ENCODE measurements at regions of chr10 and their contacts with region 1.

Region 1: DNA sequence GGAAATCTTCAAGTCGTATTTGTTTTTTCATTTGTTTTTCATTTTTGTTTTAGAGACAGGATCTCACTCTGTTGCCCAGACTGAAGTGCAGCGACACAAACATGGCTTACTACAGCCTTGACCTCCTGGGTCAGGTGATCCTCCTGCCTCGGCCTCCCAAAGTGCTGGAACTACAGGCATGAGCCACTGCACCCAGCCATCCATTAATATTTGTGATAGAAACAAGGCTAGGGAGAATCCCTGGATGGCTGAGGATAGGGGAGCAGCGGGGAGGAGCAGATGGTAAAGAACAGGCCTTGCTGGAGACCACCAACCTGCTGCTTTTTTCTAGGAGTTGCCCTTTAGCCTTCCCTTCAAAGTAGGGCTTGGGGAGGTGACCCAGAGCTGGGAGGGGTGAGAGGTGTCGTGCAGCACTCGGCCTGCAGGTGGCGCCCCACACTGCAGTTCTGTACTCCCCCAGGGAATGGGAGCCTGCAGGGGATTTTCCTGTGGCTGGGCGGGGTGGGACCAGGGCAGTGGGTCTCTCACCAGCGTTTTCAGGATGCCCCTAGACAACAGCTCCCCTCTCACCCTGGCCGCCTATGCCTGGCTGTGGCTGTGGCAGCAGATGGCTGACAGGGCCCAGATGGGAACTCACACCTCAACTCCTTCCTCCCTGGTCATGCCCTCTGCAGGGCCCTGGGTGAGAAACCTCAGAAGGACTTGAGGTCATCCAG is 12.6 kb upstream of the CDH23 start:
- DNase-seq: peak; percentile 52 to 84 (median 67)
- ATAC-seq: peak; percentile 96
- H3K4me3 ChIP-seq: no peak overlapping the region
- H3K4me3 Mint-ChIP-seq: no peak overlapping the region
- H3K27ac ChIP-seq: no peak overlapping the region
- H3K27ac Mint-ChIP-seq: no peak overlapping the region
- H3K4me1 ChIP-seq: peaks cover 5% of the 10 kb centered on the region
- H3K4me1 Mint-ChIP-seq: no peaks in the 10 kb centered on the region
- H3K27me3 ChIP-seq: no peaks in the 10 kb centered on the region
- H3K27me3 Mint-ChIP-seq: no peaks in the 10 kb centered on the region
- CTCF ChIP-seq: peak; percentile 90

Region 2: DNA sequence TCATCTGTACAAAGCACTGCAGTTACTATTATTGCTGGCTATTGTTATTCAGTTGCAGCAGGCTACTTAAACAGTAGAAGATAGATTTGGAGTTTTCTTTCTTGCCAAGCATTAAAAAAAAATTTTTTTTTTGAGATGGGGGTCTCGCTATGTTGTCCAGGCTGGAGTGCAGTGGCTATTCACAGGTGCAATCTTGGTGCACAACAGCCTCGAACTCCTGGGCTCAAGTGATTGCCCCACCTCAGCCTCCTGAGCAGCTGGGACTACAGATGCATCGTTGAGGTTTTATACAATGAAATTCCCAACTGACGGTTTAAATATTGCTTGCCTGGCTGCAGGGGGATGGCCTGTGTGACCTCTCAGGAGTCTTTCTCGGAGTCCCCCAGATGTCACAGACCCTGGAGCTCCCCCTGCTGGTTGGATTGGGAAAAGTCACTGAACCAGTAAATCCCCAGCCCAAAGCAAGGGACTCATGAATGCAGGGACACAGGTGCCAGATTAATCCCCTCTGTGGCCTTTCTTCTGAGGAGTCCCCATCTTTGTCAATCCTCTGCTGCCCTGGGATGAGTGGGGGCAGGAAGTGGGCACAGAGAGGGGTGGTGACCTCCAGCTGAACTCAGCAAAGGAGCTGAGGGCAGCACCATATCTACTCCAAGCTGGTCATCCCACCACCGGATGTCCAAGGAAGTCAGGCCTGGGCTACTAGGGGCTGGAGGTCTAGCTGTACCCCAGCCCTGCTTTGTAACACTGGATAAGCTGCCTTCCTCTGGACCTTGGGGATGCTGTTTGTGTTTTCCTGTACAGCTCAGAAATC is 185.9 kb after region 1 on chr10:
- CTCF ChIA-PET with region 1: interaction called, 7 read pairs
- POLR2A ChIA-PET with region 1: no interaction called
- intact Hi-C with region 1: loop called in 1 of 2 experiments (anchors 1 kb)
- DNase-seq: peak; percentile 52 to 86 (median 75)
- ATAC-seq: no peak
- H3K4me3 ChIP-seq: no peak overlapping the region
- H3K4me3 Mint-ChIP-seq: no peak overlapping the region
- H3K27ac ChIP-seq: no peak overlapping the region
- H3K27ac Mint-ChIP-seq: no peak overlapping the region
- H3K4me1 ChIP-seq: no peaks in the 10 kb centered on the region
- H3K4me1 Mint-ChIP-seq: no peaks in the 10 kb centered on the region
- H3K27me3 ChIP-seq: no peaks in the 10 kb centered on the region
- H3K27me3 Mint-ChIP-seq: no peaks in the 10 kb centered on the region
- CTCF ChIP-seq: peak; percentile 87

Region 3: GRCh38 chr10:71647526-71648253 is 263.6 kb after region 1 on chr10:
- CTCF ChIA-PET with region 1: no interaction called
- POLR2A ChIA-PET with region 1: no interaction called
- intact Hi-C with region 1: no loop called
- DNase-seq: no peak
- ATAC-seq: no peak
- H3K4me3 ChIP-seq: no peak overlapping the region
- H3K4me3 Mint-ChIP-seq: no peak overlapping the region
- H3K27ac ChIP-seq: no peak overlapping the region
- H3K27ac Mint-ChIP-seq: no peak overlapping the region
- H3K4me1 ChIP-seq: no peaks in the 10 kb centered on the region
- H3K4me1 Mint-ChIP-seq: no peaks in the 10 kb centered on the region
- H3K27me3 ChIP-seq: no peaks in the 10 kb centered on the region
- H3K27me3 Mint-ChIP-seq: no peaks in the 10 kb centered on the region
- CTCF ChIP-seq: no peak

Measured in CD4-positive, alpha-beta T cell (primary cell).